Mammary epithelial cell (primary cell): ENCODE measurements at regions of chr12 and their contacts with region 1.

Region 1: DNA sequence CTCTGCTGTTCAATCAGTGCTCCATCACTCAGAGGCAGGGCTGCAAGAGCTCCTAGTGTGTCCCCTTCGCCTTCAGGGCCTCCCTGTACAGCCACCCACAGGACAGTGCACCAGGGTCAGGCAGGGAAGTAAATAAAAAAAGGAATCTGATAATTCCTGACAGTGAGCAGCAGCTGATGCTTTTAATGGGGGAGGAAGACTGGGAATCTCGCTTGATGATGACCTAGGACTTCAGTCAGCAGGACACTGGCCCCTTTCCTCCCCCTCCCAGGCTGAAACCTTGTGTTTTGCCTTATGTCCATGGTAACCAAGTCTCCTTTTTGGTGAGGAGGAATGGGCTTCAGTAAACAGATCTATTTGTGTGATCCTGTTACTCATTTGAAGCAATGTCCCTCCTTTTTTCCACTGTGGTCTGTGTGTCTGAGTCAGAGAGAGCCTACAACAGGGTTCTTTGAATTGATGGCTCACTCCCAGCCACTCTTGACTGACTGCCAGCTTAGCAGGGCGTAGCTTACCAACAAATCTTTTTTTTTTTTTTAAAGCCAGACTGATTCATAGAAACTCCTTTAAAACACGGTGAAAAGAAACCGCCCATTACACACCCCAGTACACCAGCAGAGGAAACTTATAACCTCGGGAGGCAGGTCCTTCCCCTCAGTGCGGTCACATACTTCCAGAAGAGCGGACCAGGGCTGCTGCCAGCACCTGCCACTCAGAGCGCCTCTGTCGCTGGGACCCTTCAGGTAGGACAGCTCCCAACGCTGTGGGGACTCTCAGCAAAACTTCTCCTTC is at the start of gene EMP1:
- DNase-seq: peak; percentile 99
- H3K4me3 ChIP-seq: peak within 1 kb of the TSS; percentile 65 to 93 (median 81)
- H3K27ac ChIP-seq: peak within 1 kb of the TSS; percentile 98
- H3K4me1 ChIP-seq: peaks cover 50% of the 10 kb centered on the region
- H3K27me3 ChIP-seq: no peaks in the 10 kb centered on the region
- CTCF ChIP-seq: no peak
- total RNA-seq, gene EMP1: 33.7 to 204 TPM

Region 2: GRCh38 chr12:11657511-11657910 is 1538.8 kb before region 1 on chr12:
- CTCF ChIA-PET with region 1: interaction called, 17 read pairs
- dilution Hi-C with region 1: no loop called
- in situ Hi-C with region 1: no loop called
- intact Hi-C with region 1: no loop called
- DNase-seq: no peak
- H3K4me3 ChIP-seq: no peak overlapping the region
- H3K27ac ChIP-seq: no peak overlapping the region
- H3K4me1 ChIP-seq: peaks cover 55% of the 10 kb centered on the region
- H3K27me3 ChIP-seq: no peaks in the 10 kb centered on the region
- CTCF ChIP-seq: no peak

Region 3: GRCh38 chr12:13100882-13101769 is 95.2 kb before region 1 on chr12:
- CTCF ChIA-PET with region 1: interaction called, 5 read pairs
- dilution Hi-C with region 1: no loop called
- in situ Hi-C with region 1: loop called in 1 of 2 experiments (anchors 5 kb)
- intact Hi-C with region 1: loop called (anchors 1 kb)
- DNase-seq: peak; percentile 89
- H3K4me3 ChIP-seq: peak overlapping the region; percentile 28 to 47 (median 32)
- H3K27ac ChIP-seq: peak overlapping the region; percentile 100
- H3K4me1 ChIP-seq: peaks cover 54% of the 10 kb centered on the region
- H3K27me3 ChIP-seq: no peaks in the 10 kb centered on the region
- CTCF ChIP-seq: no peak

Region 4: GRCh38 chr12:13135371-13136178 is 60.8 kb before region 1 on chr12:
- CTCF ChIA-PET with region 1: interaction called, 3 read pairs
- dilution Hi-C with region 1: no loop called
- in situ Hi-C with region 1: no loop called
- intact Hi-C with region 1: loop called (anchors 2 kb)
- DNase-seq: peak; percentile 96
- H3K4me3 ChIP-seq: peak overlapping the region in 2 of 3 experiments; percentile 8 to 24
- H3K27ac ChIP-seq: peak overlapping the region; percentile 80
- H3K4me1 ChIP-seq: peaks cover 45% of the 10 kb centered on the region
- H3K27me3 ChIP-seq: no peaks in the 10 kb centered on the region
- CTCF ChIP-seq: peak in 1 of 2 donors; percentile 42

Region 5: DNA sequence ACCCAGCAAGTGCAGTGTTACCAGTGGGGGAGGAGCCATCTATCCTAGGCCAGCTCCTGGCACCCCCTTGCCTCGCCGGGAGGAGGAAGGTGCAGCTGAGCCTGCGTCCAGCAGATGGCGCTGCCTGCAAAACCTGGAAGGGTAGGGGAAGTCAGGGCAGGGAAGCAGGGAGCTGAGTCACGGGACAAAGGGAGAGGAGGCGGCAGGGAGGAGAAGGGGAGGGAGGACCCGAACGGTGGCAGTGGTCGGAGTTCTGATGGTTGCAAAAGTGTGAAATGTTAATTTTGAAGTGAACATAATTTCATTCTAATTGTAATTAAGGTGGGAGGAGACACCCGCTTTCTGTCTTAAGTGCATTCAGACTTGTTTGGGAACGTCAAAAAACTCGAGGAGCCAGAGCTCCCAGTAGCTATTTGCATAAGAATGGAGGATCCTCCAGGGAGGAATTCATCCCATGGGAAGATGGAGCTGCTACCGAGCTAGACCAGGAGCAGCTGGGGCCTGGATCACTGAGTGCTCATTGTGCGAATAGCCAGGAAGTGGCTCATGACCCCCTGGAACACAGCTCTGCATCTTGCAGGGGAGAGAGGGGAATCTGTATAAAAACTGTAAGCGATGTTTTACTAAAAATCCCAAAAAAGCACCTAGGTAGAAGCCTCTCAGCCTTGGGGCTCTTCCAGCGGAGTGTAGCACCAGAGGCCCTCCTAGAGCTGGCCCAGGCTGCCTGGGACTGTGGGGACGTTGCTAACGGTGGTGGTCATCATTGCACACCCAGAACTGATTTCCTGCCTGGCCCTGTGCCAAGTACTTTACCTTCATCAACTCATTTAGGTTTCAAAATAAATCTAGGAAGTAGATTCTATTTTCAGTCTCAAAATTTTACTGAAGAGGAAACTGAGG is 59.7 kb after region 1 on chr12:
- CTCF ChIA-PET with region 1: no interaction called
- dilution Hi-C with region 1: loop called (anchors 5 kb)
- in situ Hi-C with region 1: no loop called
- intact Hi-C with region 1: loop called (anchors 10 kb)
- DNase-seq: peak; percentile 90
- H3K4me3 ChIP-seq: peak overlapping the region; percentile 19 to 38 (median 33)
- H3K27ac ChIP-seq: no peak overlapping the region
- H3K4me1 ChIP-seq: peaks cover 13% of the 10 kb centered on the region
- H3K27me3 ChIP-seq: no peaks in the 10 kb centered on the region
- CTCF ChIP-seq: peak; percentile 99

Region 6: DNA sequence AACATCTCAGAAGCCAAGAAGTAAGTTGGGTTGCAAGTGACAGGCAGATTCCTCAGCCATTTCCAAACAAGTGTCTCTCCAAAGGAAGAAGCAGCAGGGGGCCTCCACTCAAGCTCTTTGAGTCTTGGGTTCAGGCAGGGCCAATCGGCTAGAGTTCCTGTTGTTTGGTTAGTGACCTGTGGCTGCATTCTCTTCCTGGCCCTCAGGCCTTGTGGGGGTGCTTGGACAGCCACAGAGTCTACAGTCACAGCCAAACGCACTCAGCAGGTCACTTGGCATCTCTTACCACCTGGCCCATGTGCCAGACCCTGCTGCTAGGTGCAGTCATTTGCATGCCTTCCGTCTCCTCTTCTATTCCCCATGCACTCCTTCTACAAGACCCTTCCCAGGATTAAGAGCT is 431.2 kb after region 1 on chr12:
- CTCF ChIA-PET with region 1: no interaction called
- dilution Hi-C with region 1: no loop called
- in situ Hi-C with region 1: no loop called
- intact Hi-C with region 1: no loop called
- DNase-seq: no peak
- H3K4me3 ChIP-seq: no peak overlapping the region
- H3K27ac ChIP-seq: no peak overlapping the region
- H3K4me1 ChIP-seq: no peaks in the 10 kb centered on the region
- H3K27me3 ChIP-seq: no peaks in the 10 kb centered on the region
- CTCF ChIP-seq: no peak